Activated CD4-positive, alpha-beta memory T cell treated with anti-CD3 and anti-CD28 coated beads for 36 hours (primary cell): ENCODE measurements at regions of chr10 and their contacts with region 1.

Region 1: DNA sequence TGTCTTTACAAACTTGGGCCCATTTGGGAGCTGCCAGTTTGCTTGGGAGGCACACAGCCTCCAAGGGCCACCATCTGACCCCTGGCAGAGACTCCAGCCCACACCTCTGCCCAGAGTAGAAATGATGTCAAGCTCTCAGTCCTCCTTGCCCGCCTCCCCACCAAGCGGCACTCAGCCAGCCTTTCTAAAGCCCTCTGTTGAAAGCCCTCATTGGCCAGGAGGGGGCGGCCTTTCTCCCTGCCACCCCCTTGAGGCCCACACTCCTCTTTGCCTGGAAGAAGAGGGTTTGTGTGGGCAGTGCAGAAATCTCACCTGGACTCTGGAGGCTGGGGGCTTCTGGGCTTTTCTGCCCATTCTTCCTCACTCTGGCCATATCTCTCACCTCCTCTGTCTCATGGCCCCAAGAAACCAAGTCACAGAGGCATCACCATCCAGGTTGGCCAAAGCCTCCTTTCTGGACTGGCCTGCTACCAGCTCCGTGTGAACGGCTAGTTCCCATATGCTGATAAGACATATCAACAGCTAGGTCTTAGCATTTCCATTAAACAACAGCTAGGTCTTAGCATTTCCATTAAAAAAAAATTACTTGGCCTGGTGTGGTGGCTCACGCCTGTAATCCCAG is 36.1 kb downstream of the UBTD1 start:
- DNase-seq: peak; percentile 65
- H3K4me3 Mint-ChIP-seq: no peak overlapping the region
- H3K27ac Mint-ChIP-seq: no peak overlapping the region
- H3K4me1 Mint-ChIP-seq: no peaks in the 10 kb centered on the region
- H3K27me3 Mint-ChIP-seq: no peaks in the 10 kb centered on the region

Region 2: DNA sequence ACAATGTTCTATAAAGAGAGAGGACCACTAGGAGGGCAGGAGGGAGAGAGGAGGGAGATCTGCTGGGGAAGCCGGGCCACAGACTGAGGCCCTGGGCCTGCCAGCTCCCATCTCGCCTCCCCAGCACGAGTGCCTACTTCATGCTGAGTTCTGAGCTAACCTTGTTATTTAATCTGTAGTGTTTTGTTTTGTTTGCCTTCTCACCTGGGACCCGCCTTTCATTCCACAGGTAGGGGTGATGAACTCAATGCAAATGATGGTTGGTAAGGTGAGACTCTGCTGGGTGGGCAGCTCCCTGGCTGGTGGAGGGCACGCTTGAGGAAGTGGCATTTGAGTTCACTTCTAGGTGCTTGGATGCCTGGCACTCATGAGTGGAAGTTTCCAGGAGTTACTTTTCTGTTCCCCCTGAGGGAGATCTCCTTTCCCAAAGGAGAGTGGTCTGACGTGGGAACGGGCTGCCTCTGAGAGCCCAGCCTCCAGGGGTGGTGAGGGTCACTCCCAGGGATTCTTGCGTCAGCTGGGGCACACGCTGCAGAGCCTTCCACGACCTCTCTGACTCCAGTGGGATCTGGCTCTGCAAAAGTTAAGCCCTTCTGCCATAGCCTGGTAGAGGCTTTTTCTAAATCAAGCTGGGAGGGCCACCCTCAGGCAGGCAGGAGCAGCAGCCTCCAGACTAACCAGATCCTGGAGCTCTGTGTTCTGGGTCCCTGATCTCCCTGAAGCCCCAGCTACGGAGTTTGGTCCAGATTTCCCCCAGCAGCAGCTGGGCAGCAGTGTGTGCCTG is 13.7 kb before region 1 on chr10:
- CTCF ChIA-PET with region 1: interaction called, 11 read pairs
- POLR2A ChIA-PET with region 1: no interaction called
- intact Hi-C with region 1: no loop called
- DNase-seq: no peak
- H3K4me3 Mint-ChIP-seq: no peak overlapping the region
- H3K27ac Mint-ChIP-seq: no peak overlapping the region
- H3K4me1 Mint-ChIP-seq: no peaks in the 10 kb centered on the region
- H3K27me3 Mint-ChIP-seq: peaks cover 2% of the 10 kb centered on the region